ENCODE measurements at regions of chr17 and their contacts with region 1.

Region 1: DNA sequence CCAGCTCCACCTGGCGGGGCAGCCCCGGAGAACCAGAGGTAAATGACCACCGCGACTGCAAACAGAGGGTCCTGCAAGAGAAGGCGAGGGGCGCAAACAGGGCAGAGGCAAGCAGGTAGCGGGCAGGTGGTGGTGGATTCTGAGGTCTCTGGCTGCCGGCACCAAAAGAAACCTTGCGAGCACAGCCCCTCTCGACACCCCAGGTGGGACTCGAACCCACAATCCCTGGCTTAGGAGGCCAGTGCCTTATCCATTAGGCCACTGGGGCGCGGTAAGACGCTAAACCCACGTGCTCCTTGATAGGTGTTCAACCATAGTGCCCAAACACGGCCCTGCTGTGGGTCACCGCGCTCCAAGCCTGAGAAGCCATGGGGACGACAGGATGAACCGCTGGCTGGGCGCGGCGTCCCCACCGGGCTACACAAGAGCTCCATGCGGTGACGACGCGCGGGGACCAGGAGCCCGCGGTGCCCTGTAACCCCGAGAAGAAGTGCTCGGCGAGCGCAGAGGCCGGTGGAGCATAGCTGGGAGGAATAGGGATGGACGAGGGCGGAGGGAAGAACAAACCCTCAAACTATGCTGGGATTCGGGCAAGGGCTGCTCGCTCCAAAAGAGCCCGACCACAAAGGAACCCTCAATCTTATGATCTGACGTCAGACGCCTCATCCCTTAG is 12.4 kb downstream of the ATP5PD start:
- DNase-seq: peak; percentile 58 to 77
- ATAC-seq: peak; percentile 64 to 68
- H3K4me3 ChIP-seq: peak overlapping the region; percentile 68 to 81 (median 74)
- H3K27ac ChIP-seq: peak overlapping the region; percentile 79 to 88 (median 85)
- H3K4me1 ChIP-seq: peaks cover 11 to 25% of the 10 kb centered on the region in 2 donors
- H3K27me3 ChIP-seq: no peaks in the 10 kb centered on the region
- CTCF ChIP-seq: peak in 1 of 5 experiments; percentile 14
- POLR2A ChIP-seq: no peak

Region 2: GRCh38 chr17:74987418-74987908 is 46.9 kb before region 1 on chr17 and contains the start of gene CDR2L:
- in situ Hi-C with region 1: no loop called
- intact Hi-C with region 1: loop called (anchors 2 kb)
- DNase-seq: peak; percentile 92
- ATAC-seq: peak; percentile 89 to 90
- H3K4me3 ChIP-seq: peak within 1 kb of the TSS; percentile 63 to 87 (median 70)
- H3K27ac ChIP-seq: peak within 1 kb of the TSS; percentile 82 to 86 (median 84)
- H3K4me1 ChIP-seq: peaks cover 11 to 21% of the 10 kb centered on the region in 2 donors
- H3K27me3 ChIP-seq: peaks cover 0 to 9% (median 8%) of the 10 kb centered on the region in 3 donors
- CTCF ChIP-seq: no peak
- POLR2A ChIP-seq: peak; percentile 82 to 87
- total RNA-seq, gene CDR2L: 1.3 to 3.6 (median 2.6) TPM

Region 3: GRCh38 chr17:75012346-75013091 is 21.9 kb before region 1 on chr17 and contains the start of gene MRPL58:
- in situ Hi-C with region 1: no loop called
- intact Hi-C with region 1: loop called (anchors 1 kb)
- DNase-seq: peak; percentile 60 to 72
- ATAC-seq: peak; percentile 93 to 94
- H3K4me3 ChIP-seq: peak within 1 kb of the TSS; percentile 82 to 98 (median 88)
- H3K27ac ChIP-seq: peak within 1 kb of the TSS; percentile 79 to 87 (median 82)
- H3K4me1 ChIP-seq: peaks cover 16 to 22% of the 10 kb centered on the region in 2 donors
- H3K27me3 ChIP-seq: no peaks in the 10 kb centered on the region
- CTCF ChIP-seq: peak; percentile 45 to 72 (median 60)
- POLR2A ChIP-seq: no peak
- total RNA-seq, gene MRPL58: 97.9 to 141 (median 107) TPM

Region 4: DNA sequence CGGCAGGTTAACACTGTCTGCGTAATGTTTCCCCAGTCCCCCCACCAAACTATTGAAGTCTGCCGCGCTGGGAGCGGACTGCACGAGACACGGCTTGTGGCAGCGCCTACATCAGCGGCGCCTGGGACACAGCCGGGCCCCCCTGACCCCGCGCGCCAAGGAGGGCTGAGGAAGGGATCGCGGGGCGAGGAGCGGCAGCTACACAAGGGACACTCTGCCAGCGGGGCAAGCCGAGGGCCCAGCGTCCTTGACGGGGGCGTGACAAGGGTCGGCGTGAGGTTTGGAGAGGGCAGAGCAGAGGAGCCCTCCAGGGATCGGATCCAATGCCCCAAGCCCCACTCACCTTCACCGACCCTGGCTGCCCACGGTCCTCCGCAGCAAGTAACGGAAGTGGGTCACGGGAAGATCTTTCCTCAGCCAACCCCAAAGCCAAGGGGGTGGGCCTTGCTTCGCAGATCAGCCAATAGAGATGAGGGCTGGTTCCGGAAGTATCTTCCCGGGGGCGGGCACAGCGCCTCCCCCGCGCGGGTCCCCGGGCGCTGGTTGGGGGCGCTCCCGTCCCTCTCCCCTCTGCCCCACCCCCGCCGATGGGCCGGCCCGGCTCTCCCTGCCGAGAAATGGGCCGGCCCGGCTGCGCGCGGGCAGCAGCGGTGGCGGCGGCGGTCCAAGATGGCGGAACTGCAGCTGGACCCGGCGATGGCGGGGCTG is 12.4 kb after region 1 on chr17 and contains the starts of genes ATP5PD and KCTD2:
- in situ Hi-C with region 1: no loop called
- intact Hi-C with region 1: loop called (anchors 1 kb)
- DNase-seq: peak; percentile 95 to 97
- ATAC-seq: peak; percentile 99
- H3K4me3 ChIP-seq: peak within 1 kb of the TSS; percentile 84 to 100 (median 96)
- H3K27ac ChIP-seq: peak within 1 kb of the TSS; percentile 98 to 100 (median 98)
- H3K4me1 ChIP-seq: peaks cover 26 to 28% of the 10 kb centered on the region in 2 donors
- H3K27me3 ChIP-seq: no peaks in the 10 kb centered on the region
- CTCF ChIP-seq: no peak
- POLR2A ChIP-seq: peak; percentile 96 to 98
- total RNA-seq, gene ATP5PD: 377 to 495 (median 491) TPM
- total RNA-seq, gene KCTD2: 29.4 to 51.1 (median 41.8) TPM